Activated CD4-positive, alpha-beta T cell treated with anti-CD3 and anti-CD28 coated beads, Interleukin-2, amount 10 ng/mL, durations not matched to agents 24 days and 14 days (primary cell): ENCODE measurements at regions of chr9 and their contacts with region 1.

Region 1: DNA sequence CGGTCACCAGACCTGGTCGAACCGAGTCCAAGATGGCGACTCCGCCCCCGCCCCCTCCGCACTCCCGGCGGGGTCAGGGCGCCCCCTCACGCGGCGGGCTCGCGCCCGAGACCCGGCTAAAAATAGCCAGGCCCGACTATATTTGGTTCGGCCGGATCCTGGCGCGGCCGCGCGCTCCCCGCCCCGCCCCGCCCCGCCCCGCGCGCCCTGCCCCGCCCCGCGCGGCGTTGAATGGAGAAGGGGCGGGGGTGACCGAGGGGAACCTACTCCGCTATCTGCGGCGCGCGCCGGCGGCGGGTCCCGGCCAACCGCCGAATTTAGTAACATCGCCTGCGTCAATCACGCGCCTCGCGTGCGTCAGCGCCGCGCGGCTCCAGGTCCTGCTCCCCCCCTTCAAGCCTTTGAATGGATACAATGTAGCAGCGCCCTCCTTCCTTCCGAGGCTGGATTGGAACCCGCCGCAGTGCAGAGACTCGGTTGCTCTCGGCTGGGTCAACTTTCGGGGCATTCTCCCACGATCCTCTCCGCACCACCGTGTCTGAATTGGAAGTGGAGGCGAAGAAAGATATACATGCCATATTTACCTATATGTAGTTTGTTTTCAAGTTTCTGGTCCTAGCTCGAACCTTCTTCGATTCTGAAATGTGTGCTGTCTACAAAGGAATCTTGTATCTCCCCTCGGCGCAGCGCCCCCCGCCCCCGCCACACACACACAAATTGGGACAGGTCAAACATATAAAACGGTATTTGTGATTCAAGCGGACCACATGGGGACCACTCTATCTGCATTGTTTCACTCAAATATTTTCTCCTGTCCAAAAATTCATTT is 1.6 kb upstream of the NR4A3 start:
- DNase-seq: peak; percentile 95
- H3K4me3 Mint-ChIP-seq: peak overlapping the region; percentile 99
- H3K27ac Mint-ChIP-seq: peak overlapping the region; percentile 96
- H3K4me1 Mint-ChIP-seq: peaks cover 49% of the 10 kb centered on the region
- H3K27me3 Mint-ChIP-seq: peaks cover 27% of the 10 kb centered on the region

Region 2: GRCh38 chr9:99104459-99105151 is 715.5 kb before region 1 on chr9 and contains the start of gene TGFBR1:
- intact Hi-C with region 1: loop called (anchors 10 kb)
- DNase-seq: peak; percentile 99
- H3K4me3 Mint-ChIP-seq: peak within 1 kb of the TSS; percentile 90
- H3K27ac Mint-ChIP-seq: peak within 1 kb of the TSS; percentile 84
- H3K4me1 Mint-ChIP-seq: peaks cover 53% of the 10 kb centered on the region
- H3K27me3 Mint-ChIP-seq: no peaks in the 10 kb centered on the region
- total RNA-seq, gene TGFBR1: 29.7 and 35.3 TPM in 2 replicates

Region 3: DNA sequence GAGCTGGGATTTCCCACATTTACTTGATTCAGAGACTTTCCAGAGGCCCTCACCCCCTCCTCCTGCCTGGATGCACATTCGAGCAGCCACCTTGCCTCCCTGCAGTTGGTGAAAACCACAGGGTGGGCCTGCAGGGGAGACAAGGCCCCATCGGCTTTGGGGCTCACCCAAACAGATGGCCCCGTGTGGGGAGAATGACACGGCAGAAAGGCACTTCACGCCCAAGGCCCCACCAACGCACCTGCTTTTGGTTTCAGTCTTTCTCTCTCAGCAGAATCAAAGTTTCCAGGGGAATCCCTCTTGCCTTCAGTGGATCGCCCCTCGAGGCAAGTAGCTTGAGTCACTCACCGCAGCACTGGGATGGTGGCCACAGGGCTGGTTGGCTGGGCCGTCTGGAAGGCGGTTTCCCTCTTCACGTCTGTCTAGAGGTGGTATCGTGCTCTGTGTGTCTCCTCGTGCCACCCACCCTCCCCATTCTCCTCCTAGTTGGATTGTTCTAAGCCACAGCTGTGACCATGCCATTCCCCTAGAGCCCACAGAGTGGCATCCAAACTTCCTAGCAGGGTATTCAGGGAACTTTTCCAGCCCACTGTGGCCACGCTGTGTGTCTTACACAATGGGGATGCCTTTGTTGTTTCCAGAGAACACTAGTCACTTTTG is 566.2 kb before region 1 on chr9:
- intact Hi-C with region 1: loop called (anchors 1 kb)
- DNase-seq: peak; percentile 93
- H3K4me3 Mint-ChIP-seq: peak overlapping the region; percentile 70
- H3K27ac Mint-ChIP-seq: peak overlapping the region; percentile 97
- H3K4me1 Mint-ChIP-seq: peaks cover 50% of the 10 kb centered on the region
- H3K27me3 Mint-ChIP-seq: no peaks in the 10 kb centered on the region

Region 4: DNA sequence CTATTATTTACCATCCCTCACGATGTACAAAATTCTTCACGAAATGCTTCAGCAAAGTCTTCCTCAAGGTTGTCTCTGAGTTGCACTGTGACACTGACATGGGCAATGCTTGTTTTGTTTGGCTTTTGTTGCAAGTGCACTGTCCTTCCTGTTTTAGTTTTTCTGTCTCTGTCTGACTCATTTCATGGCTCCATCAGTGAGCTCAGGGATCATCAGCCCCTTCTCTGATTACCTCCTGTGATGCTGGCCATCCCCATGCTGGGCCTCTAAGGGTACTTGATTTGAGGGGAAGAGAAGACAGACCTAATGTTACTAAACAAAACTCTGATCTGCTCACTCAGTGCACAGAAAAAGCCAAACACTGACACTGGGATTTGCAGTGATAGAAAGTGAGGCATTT is 48.8 kb after region 1 on chr9:
- intact Hi-C with region 1: loop called (anchors 2 kb)
- DNase-seq: peak; percentile 65
- H3K4me3 Mint-ChIP-seq: no peak overlapping the region
- H3K27ac Mint-ChIP-seq: peak overlapping the region; percentile 42
- H3K4me1 Mint-ChIP-seq: peaks cover 30% of the 10 kb centered on the region
- H3K27me3 Mint-ChIP-seq: no peaks in the 10 kb centered on the region

Region 5: GRCh38 chr9:100084734-100085133 is 264.7 kb after region 1 on chr9:
- intact Hi-C with region 1: loop called (anchors 5 kb)
- DNase-seq: no peak
- H3K4me3 Mint-ChIP-seq: peak overlapping the region; percentile 27
- H3K27ac Mint-ChIP-seq: no peak overlapping the region
- H3K4me1 Mint-ChIP-seq: peaks cover 49% of the 10 kb centered on the region
- H3K27me3 Mint-ChIP-seq: no peaks in the 10 kb centered on the region